A549 (cell line): ENCODE measurements at regions of chr18 and their contacts with region 1.

Region 1: GRCh38 chr18:68660354-68661183 is 54.3 kb downstream of the TMX3 start:
- DNase-seq: peak; percentile 3 to 33
- ATAC-seq: no peak
- H3K4me3 ChIP-seq: no peak overlapping the region
- H3K27ac ChIP-seq: no peak overlapping the region
- H3K4me1 ChIP-seq: no peaks in the 10 kb centered on the region
- CTCF ChIP-seq: peak; percentile 52
- EP300 ChIP-seq: no peak
- POLR2A ChIP-seq: no peak
- RAD21 ChIP-seq: peak; percentile 46 to 49; a peak in 4 of 5 replicates

Region 2: GRCh38 chr18:67217551-67218166 is 1442.9 kb before region 1 on chr18:
- CTCF ChIA-PET with region 1: interaction called, 16 read pairs
- POLR2A ChIA-PET with region 1: no interaction called
- DNase-seq: peak; percentile 1 to 44
- ATAC-seq: peak; percentile 56 to 75; a peak in 4 of 6 replicates
- H3K4me3 ChIP-seq: no peak overlapping the region
- H3K27ac ChIP-seq: no peak overlapping the region
- H3K4me1 ChIP-seq: no peaks in the 10 kb centered on the region
- CTCF ChIP-seq: peak; percentile 68
- EP300 ChIP-seq: no peak
- POLR2A ChIP-seq: no peak
- RAD21 ChIP-seq: peak; percentile 83 to 87

Region 3: GRCh38 chr18:67515945-67516538 is 1144.5 kb before region 1 on chr18:
- CTCF ChIA-PET with region 1: interaction called, 11 read pairs
- POLR2A ChIA-PET with region 1: no interaction called
- DNase-seq: peak; percentile 44 to 75
- ATAC-seq: peak; percentile 81 to 86
- H3K4me3 ChIP-seq: peak overlapping the region; percentile 71
- H3K27ac ChIP-seq: peak overlapping the region; percentile 35 to 77; a peak in 4 of 6 replicates
- H3K4me1 ChIP-seq: no peaks in the 10 kb centered on the region
- CTCF ChIP-seq: peak; percentile 60
- EP300 ChIP-seq: no peak
- POLR2A ChIP-seq: no peak
- RAD21 ChIP-seq: peak; percentile 76 to 82

Region 4: GRCh38 chr18:68564961-68565360 is 95.6 kb before region 1 on chr18:
- CTCF ChIA-PET with region 1: no interaction called
- POLR2A ChIA-PET with region 1: no interaction called
- DNase-seq: no peak
- ATAC-seq: no peak
- H3K4me3 ChIP-seq: no peak overlapping the region
- H3K27ac ChIP-seq: no peak overlapping the region
- H3K4me1 ChIP-seq: no peaks in the 10 kb centered on the region
- CTCF ChIP-seq: no peak
- EP300 ChIP-seq: no peak
- POLR2A ChIP-seq: no peak
- RAD21 ChIP-seq: no peak

Region 5: DNA sequence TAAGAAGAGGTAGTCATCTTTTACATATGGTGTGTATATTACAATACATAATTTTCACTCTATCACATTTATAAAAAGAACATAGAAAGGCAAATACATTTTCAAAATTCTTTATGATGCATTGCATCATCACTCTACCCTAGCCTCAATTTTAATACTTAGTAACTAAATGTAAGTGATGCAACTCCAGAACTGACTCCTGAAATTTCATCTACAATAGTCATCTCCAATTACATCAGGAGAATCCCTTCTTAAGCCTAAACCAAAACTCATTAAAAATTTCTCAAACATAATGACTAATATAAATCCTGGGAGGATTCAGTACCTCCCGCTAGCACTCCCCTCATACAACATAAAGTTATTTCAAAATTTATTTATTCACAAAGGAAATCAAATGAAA is 38.5 kb after region 1 on chr18:
- CTCF ChIA-PET with region 1: no interaction called
- POLR2A ChIA-PET with region 1: no interaction called
- DNase-seq: no peak
- ATAC-seq: no peak
- H3K4me3 ChIP-seq: no peak overlapping the region
- H3K27ac ChIP-seq: no peak overlapping the region
- H3K4me1 ChIP-seq: peaks cover 10% of the 10 kb centered on the region; the same call in 2 of the 3 replicates
- CTCF ChIP-seq: no peak
- EP300 ChIP-seq: no peak
- POLR2A ChIP-seq: no peak
- RAD21 ChIP-seq: no peak